PC-3 (cell line): ENCODE measurements at regions of chr11 and their contacts with region 1.

Region 1: GRCh38 chr11:46308631-46309419 is 31.4 kb downstream of the CREB3L1 start:
- DNase-seq: peak; percentile 70
- ATAC-seq: peak; percentile 79
- H3K4me3 ChIP-seq: no peak overlapping the region
- H3K27ac ChIP-seq: no peak overlapping the region
- H3K4me1 ChIP-seq: peaks cover 8% of the 10 kb centered on the region; the same call in 1 of the 2 replicates
- H3K27me3 ChIP-seq: no peaks in the 10 kb centered on the region
- CTCF ChIP-seq: peak; percentile 92

Region 2: DNA sequence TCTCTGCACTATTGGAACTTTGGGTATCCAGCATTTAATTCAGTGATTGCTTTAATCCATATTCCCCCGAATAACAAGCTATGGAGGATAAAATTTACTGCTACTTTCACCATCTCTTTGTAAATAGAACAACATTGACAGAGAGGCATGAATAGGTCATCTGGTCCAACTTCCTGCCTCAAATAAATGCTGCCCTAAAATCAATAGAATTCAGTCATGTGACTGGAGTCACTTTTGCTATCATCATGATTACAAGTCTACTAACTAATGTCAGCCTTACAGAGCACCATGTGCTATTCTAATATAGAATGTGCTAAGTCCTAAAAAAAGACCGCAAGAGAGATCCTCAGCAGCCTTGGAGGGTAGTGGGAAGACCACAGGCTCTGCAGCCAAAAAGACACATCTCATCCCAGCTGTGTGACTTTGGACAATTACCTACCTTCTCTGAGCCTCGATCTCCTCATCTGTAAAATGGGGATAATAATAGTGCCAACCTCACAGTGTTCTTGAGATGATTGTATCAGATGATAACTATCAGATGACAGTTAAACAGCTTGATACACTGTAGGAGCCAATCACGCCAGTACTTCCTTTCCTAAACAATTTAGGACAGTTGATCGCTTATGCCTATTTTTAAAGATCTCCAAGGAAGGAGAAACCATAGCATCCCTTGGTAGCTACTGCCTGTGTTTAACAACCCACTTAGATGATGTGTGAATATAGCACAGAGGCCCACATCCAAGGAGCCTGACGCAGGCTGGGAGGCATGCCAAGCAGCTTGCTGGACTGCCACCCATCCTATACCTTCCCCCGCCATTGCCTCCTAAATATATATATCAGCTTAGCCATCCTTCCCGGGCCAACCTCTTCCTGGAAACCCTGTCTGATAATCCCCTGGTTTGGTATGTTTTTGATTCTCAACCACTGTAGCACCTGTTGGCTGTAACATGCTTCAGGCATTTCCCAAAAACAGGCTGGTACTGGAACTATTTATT is 110.3 kb before region 1 on chr11:
- CTCF ChIA-PET with region 1: no interaction called
- POLR2A ChIA-PET with region 1: interaction called, 14 read pairs
- intact Hi-C with region 1: no loop called
- DNase-seq: no peak
- ATAC-seq: no peak
- H3K4me3 ChIP-seq: no peak overlapping the region
- H3K27ac ChIP-seq: no peak overlapping the region
- H3K4me1 ChIP-seq: peaks cover 2% of the 10 kb centered on the region; the same call in 1 of the 2 replicates
- H3K27me3 ChIP-seq: no peaks in the 10 kb centered on the region
- CTCF ChIP-seq: no peak

Region 3: DNA sequence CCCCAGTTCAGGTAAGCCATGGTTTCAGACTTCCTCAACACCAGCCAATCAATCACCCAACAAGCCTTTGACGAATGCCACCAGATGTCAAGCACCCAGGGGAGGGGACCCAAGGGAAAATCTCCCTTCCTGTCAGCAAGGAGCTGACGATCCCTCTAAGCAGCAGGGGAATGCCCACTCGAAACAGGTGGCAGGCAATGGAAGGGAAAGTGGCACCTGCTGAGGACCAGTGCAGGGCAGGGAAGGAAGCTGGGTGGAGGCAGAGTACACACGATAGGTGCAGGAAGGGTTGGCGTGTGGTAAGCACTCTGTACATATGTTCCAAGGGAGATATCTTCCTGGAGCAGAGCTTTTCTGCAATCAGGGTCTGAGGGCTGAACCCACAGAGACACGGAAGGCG is 43.1 kb before region 1 on chr11:
- CTCF ChIA-PET with region 1: no interaction called
- POLR2A ChIA-PET with region 1: no interaction called
- intact Hi-C with region 1: no loop called
- DNase-seq: no peak
- ATAC-seq: no peak
- H3K4me3 ChIP-seq: no peak overlapping the region
- H3K27ac ChIP-seq: no peak overlapping the region
- H3K4me1 ChIP-seq: no peaks in the 10 kb centered on the region
- H3K27me3 ChIP-seq: no peaks in the 10 kb centered on the region
- CTCF ChIP-seq: no peak

Region 4: DNA sequence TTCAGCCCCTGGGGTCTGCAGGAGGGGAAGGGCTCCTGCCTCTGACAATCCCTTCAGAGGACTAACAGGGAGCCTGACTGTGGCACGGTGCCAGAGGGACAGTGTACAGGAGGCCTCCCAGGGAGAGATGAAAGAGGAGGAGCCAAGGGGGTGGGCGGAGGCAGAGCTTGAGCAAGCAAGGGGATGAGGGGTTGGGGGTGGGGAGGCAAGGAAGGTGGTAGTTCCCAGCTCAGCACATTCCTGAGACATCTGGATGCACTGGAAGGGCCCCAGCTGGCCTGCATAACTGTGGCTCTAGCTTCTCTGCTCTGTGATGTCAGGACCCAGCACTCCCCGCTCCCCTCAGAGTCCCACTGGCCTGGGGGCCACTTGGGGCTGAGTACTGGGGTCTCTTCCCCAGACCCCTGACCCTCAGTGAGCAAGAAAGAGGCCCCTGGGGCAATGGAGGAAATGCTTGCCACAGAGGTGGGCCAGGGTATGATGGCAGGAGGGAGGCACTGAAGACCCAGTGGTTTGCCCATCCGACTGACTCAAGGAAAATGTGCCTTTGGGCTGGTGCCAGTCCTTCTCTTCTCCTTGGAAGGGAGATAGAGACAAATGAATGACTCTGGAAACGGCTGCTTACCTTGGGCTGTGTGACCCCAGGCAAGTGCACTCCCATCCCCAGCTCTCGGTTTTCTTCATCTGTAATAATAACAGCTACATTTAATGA is 18.1 kb before region 1 on chr11:
- CTCF ChIA-PET with region 1: no interaction called
- POLR2A ChIA-PET with region 1: no interaction called
- intact Hi-C with region 1: no loop called
- DNase-seq: peak; percentile 33
- ATAC-seq: peak; percentile 6; the same call in 1 of the 2 replicates
- H3K4me3 ChIP-seq: no peak overlapping the region
- H3K27ac ChIP-seq: no peak overlapping the region
- H3K4me1 ChIP-seq: peaks cover 33% of the 10 kb centered on the region
- H3K27me3 ChIP-seq: no peaks in the 10 kb centered on the region
- CTCF ChIP-seq: no peak